AG04450 (cell line): ENCODE measurements at regions of chr15 and their contacts with region 1.

Region 1: DNA sequence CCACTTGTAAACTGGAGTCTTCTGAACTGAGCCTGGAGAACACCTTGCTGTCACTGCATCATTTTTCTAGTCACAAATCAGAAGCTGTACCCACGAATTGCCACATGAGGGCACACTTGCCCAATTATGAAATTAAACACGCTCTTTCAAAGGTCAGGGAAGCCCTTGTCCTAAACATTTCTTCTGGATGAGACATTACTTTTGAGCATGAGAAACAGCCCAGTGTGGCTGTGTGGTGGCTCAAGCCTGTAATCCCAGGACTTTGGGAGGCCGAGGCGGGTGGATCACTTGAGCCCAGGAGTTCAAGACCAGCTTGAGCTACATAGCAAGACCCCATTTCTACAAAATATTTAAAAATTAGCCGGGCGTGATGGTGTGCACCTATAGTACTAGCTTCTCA is 27.5 kb upstream of the CFAP161 start:
- DNase-seq: peak; percentile 63
- H3K4me3 ChIP-seq: no peak overlapping the region
- H3K27ac ChIP-seq: no peak overlapping the region
- H3K27me3 ChIP-seq: peaks cover 13% of the 10 kb centered on the region
- CTCF ChIP-seq: peak; percentile 75

Region 2: GRCh38 chr15:81054236-81054635 is 52.3 kb before region 1 on chr15:
- CTCF ChIA-PET with region 1: no interaction called
- POLR2A ChIA-PET with region 1: no interaction called
- DNase-seq: no peak
- H3K4me3 ChIP-seq: no peak overlapping the region
- H3K27ac ChIP-seq: no peak overlapping the region
- H3K27me3 ChIP-seq: peaks cover 2% of the 10 kb centered on the region
- CTCF ChIP-seq: no peak

Region 3: DNA sequence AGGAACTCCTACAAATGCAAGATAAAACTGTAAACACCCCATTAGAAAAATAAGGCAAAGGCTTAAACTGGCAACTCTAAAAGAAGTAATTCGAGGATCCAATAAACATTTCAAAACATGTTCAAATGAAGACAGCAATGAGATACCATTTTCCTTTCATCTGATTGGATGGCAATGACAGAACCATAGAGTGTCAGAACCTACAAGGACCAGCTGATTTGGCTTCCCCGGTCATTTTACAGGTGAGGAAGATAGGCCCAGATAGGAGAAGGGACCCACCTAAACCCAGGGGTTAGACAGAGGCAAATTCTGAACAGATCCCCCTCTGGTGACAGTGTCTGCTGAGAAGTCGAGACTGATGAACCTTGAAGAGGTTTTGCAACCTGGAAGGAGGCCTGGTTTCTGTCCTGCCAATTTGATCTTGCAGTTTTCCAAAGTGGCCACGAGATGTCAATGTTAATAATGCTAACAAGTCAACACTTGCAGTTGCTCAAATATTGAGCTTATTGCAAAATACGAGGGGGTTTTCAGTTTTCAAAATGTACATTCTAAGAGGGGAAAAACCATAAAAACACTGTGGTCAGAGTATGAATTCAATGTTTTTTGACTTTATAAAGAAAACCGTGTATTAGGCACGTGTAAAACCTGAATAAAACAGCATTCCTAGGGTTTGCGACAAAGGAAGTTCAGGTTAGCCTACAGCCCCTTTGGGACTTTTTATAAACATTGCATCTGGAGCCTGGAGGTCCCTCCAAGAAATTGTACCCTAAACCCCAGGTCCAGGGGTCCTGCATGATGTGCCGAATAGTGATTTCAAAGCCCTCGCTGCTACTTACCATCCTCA is 49.0 kb after region 1 on chr15:
- CTCF ChIA-PET with region 1: interaction called, 21 read pairs
- POLR2A ChIA-PET with region 1: no interaction called
- DNase-seq: peak; percentile 46
- H3K4me3 ChIP-seq: no peak overlapping the region
- H3K27ac ChIP-seq: no peak overlapping the region
- H3K27me3 ChIP-seq: no peaks in the 10 kb centered on the region
- CTCF ChIP-seq: peak; percentile 77

Region 4: DNA sequence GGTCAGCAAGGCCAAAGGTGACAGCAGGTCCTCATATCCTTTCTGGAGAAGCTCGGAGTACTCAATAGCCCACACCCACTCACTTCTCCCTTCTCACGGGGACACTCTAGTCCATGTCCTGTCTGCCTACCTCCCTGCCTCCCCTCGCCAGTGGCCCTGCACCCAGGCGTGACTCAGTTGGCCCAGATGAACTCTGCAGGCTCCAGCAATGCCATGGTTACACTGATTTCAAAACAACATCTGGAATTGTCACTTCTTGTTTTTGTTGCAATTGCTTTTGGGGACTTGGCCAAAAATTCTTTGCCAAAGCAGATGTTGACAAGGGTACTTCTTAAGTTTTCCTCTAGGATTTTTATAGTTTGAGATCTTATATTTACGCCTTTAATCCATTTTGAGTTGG is 103.1 kb after region 1 on chr15:
- CTCF ChIA-PET with region 1: no interaction called
- POLR2A ChIA-PET with region 1: no interaction called
- DNase-seq: no peak
- H3K4me3 ChIP-seq: no peak overlapping the region
- H3K27ac ChIP-seq: no peak overlapping the region
- H3K27me3 ChIP-seq: no peaks in the 10 kb centered on the region
- CTCF ChIP-seq: no peak